Calu3 (cell line): ENCODE measurements at regions of chr17 and their contacts with region 1.

Region 1: DNA sequence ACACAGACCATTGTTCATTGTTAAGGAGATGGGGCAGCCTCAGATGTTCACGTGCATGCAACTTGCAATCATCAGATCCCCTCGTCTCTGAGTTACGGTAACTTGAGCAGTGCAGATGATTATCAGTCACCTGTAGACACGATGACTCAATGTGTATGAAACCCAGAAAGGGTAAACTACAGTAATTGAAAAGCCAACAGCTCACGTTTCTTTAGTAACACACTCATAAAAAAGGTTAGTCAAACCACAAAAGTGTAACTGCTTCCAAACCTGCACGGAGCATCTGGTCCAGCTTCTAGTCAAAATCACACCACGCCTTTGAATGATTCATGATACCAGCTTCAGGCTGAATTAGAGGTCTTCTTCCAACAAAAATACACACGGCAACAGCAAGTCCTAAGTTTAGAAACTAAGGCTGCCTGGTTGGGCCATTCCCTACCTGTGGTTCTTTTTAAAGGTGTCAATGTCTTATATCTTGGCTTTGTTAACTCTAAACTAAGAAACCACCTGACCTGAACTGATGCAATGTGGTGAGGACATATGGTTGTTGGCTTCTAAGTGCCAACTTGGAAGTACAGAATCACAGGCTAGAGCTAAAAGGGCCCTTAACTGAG is 32.3 kb downstream of the GRB7 start:
- DNase-seq: peak; percentile 100
- H3K4me3 Mint-ChIP-seq: peak overlapping the region; percentile 10
- H3K27ac Mint-ChIP-seq: peak overlapping the region; percentile 60
- H3K4me1 Mint-ChIP-seq: peaks cover 72% of the 10 kb centered on the region
- H3K27me3 Mint-ChIP-seq: peaks cover 13% of the 10 kb centered on the region
- CTCF ChIP-seq: no peak

Region 2: DNA sequence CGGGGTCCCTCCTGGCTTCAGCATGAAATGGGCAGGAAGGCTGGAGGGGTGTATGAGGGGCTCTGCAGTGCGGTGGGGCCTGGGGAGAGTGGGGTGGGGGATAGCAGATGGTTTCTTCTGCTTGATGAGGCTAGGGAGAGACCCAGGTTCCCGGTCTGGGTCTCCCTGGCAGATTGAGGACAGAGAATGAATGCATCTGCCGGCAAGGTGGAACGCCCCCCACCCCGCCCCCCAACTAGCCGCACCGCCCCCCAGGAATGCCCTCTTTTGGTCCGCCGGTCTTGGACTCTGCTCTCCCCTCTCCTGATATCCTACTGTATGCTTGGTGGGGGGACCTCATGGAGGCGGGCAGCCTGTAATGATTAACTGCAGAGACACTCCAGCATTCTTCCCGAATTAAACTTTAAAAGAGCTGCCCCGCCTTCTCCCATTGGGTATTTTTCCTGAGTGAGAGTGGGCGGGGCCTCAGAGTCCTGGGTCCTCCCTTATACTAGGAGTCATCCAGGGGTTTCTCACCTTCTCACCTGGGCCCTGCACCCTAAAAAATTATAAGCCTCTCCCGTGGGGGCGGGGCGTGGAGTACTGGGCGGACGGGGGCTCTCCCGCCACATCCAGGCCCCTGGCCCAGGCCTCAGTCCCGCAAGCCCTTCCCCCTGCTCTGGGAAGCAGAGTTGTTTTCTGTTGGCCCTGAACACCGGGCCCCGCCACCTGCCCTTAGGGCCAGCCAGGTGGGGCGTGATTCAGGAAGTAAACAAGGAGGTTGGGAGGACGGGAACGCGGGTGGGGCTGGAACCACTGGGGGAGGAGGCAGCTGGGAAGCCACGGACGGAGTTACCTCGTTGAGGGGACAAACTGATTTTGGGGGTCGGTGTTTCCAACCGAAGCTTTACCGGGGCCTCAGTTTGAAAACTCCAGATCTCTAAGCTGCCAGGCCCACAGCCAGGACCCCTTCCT is 30.9 kb before region 1 on chr17:
- CTCF ChIA-PET with region 1: interaction called, 34,714 read pairs
- intact Hi-C with region 1: loop called (anchors 1 kb)
- DNase-seq: peak; percentile 100
- H3K4me3 Mint-ChIP-seq: peak overlapping the region; percentile 77
- H3K27ac Mint-ChIP-seq: peak overlapping the region; percentile 21
- H3K4me1 Mint-ChIP-seq: peaks cover 54% of the 10 kb centered on the region
- H3K27me3 Mint-ChIP-seq: no peaks in the 10 kb centered on the region
- CTCF ChIP-seq: no peak

Region 3: DNA sequence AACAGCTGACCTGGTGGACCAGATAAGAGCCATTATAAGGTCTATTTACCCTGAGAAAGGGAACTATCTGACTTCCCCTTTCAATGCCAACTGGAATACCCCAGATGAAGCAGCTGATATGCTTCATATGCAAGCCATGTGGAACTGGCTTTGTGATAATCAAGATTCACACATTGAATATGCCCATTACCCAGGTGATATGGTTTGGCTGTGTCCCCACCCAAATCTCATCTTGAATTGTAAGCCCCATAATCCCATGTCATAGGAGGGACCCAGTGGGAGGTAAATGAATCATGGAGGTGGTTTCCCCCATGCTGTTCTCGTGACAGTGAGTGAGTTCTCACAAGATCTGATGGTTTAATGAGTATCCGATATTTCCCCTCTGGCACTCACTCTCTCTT is 52.0 kb after region 1 on chr17:
- CTCF ChIA-PET with region 1: interaction called, 1,211 read pairs
- intact Hi-C with region 1: no loop called
- DNase-seq: peak; percentile 59
- H3K4me3 Mint-ChIP-seq: no peak overlapping the region
- H3K27ac Mint-ChIP-seq: no peak overlapping the region
- H3K4me1 Mint-ChIP-seq: peaks cover 9% of the 10 kb centered on the region
- H3K27me3 Mint-ChIP-seq: no peaks in the 10 kb centered on the region
- CTCF ChIP-seq: no peak

Region 4: GRCh38 chr17:39852239-39852638 is 82.2 kb after region 1 on chr17:
- CTCF ChIA-PET with region 1: interaction called, 543 read pairs
- intact Hi-C with region 1: no loop called
- DNase-seq: peak; percentile 59
- H3K4me3 Mint-ChIP-seq: no peak overlapping the region
- H3K27ac Mint-ChIP-seq: no peak overlapping the region
- H3K4me1 Mint-ChIP-seq: peaks cover 10% of the 10 kb centered on the region
- H3K27me3 Mint-ChIP-seq: no peaks in the 10 kb centered on the region
- CTCF ChIP-seq: no peak

Region 5: DNA sequence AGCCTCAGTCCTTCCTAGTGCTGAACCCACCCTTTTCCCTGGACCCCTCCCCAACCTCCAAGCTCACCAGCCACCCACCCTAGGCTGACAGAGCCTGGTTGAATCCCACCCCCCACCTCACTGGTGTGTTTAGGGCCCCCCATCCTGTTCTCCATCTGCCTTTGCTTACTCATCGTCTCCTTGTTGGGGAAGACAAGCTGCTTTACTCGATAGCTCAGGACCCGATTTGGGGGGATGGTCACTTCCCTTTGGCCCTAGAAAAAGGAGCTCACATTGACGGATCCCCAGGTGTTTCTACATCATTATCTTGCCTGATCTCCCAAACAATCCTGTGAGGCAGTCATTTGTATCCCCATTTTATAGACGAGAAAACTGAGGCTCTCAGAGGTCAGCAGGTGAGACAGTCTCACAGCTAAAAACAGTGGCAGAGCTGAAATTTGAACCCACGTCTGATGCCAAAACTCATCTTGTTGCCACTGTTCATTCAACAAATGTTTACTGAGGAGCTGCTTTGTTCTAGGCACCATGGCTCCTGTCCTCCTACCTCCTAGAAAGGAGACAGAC is 138.8 kb after region 1 on chr17:
- CTCF ChIA-PET with region 1: interaction called, 1,212 read pairs
- intact Hi-C with region 1: no loop called
- DNase-seq: peak; percentile 67
- H3K4me3 Mint-ChIP-seq: no peak overlapping the region
- H3K27ac Mint-ChIP-seq: no peak overlapping the region
- H3K4me1 Mint-ChIP-seq: no peaks in the 10 kb centered on the region
- H3K27me3 Mint-ChIP-seq: no peaks in the 10 kb centered on the region
- CTCF ChIP-seq: no peak

Region 6: GRCh38 chr17:39946551-39947330 is 176.7 kb after region 1 on chr17:
- CTCF ChIA-PET with region 1: interaction called, 1,070 read pairs
- intact Hi-C with region 1: no loop called
- DNase-seq: peak; percentile 86
- H3K4me3 Mint-ChIP-seq: no peak overlapping the region
- H3K27ac Mint-ChIP-seq: no peak overlapping the region
- H3K4me1 Mint-ChIP-seq: peaks cover 39% of the 10 kb centered on the region
- H3K27me3 Mint-ChIP-seq: peaks cover 57% of the 10 kb centered on the region
- CTCF ChIP-seq: no peak

Region 7: DNA sequence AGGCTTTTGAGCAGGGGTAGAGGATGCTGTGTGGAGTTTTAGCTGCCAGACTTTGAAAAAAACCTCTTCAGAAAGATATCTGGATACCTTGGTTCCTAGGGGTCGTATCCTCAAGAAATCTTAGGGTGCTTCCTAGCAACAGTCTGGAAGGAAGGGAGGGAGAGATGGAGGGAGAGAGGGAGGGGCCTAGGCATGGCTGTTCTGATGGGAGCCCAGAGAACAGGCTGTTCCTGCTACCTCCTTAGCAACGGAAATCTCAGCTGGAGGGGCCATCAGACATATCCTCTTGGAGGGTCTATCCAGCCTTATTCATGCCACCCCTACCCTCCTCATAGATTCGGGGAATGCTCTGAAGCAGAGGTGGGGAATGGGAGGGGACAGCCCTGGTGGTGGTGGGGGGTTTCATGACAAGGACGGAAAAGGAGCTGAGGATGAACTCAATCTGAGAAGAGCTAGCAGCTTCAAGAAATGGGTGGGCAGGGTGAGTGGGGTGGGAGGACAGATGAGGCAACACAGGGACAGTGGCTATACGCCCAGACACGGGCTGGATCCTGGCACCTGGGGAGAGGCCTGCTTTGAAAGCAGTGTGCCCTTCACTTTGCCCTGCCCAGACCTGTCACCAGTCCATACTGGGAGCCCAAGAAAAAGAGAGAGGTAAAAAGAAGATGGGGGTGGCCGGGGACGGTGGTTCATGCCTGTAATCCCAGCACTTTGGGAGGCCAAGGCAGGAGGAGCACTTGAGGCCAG is 289.8 kb after region 1 on chr17:
- CTCF ChIA-PET with region 1: no interaction called
- intact Hi-C with region 1: no loop called
- DNase-seq: no peak
- H3K4me3 Mint-ChIP-seq: no peak overlapping the region
- H3K27ac Mint-ChIP-seq: no peak overlapping the region
- H3K4me1 Mint-ChIP-seq: peaks cover 40% of the 10 kb centered on the region
- H3K27me3 Mint-ChIP-seq: peaks cover 70% of the 10 kb centered on the region
- CTCF ChIP-seq: no peak

Region 8: GRCh38 chr17:40410082-40410481 is 640.0 kb after region 1 on chr17:
- CTCF ChIA-PET with region 1: interaction called, 25 read pairs
- intact Hi-C with region 1: no loop called
- DNase-seq: no peak
- H3K4me3 Mint-ChIP-seq: no peak overlapping the region
- H3K27ac Mint-ChIP-seq: peak overlapping the region; percentile 11
- H3K4me1 Mint-ChIP-seq: peaks cover 24% of the 10 kb centered on the region
- H3K27me3 Mint-ChIP-seq: no peaks in the 10 kb centered on the region
- CTCF ChIP-seq: no peak

Region 9: GRCh38 chr17:41254861-41255260 is 1484.8 kb after region 1 on chr17:
- CTCF ChIA-PET with region 1: no interaction called
- intact Hi-C with region 1: no loop called
- DNase-seq: no peak
- H3K4me3 Mint-ChIP-seq: no peak overlapping the region
- H3K27ac Mint-ChIP-seq: no peak overlapping the region
- H3K4me1 Mint-ChIP-seq: no peaks in the 10 kb centered on the region
- H3K27me3 Mint-ChIP-seq: peaks cover 22% of the 10 kb centered on the region
- CTCF ChIP-seq: no peak